Dendritic cell treated with granulocyte-macrophage colony-stimulating factor and Interleukin-4, amounts not matched to agents 40 ng/mL and 50 ng/mL, for 4 days (primary cell): ENCODE measurements at regions of chr6 and their contacts with region 1.

Region 1: GRCh38 chr6:32689531-32690501 is 23.4 kb upstream of the HLA-DQB1 start:
- H3K4me3 Mint-ChIP-seq: peak overlapping the region; percentile 59
- H3K27ac Mint-ChIP-seq: peak overlapping the region; percentile 86
- H3K4me1 Mint-ChIP-seq: peaks cover 33% of the 10 kb centered on the region
- H3K27me3 Mint-ChIP-seq: peaks cover 6% of the 10 kb centered on the region

Region 2: GRCh38 chr6:32424589-32425300 is 265.1 kb before region 1 on chr6:
- intact Hi-C with region 1: no loop called
- H3K4me3 Mint-ChIP-seq: no peak overlapping the region
- H3K27ac Mint-ChIP-seq: no peak overlapping the region
- H3K4me1 Mint-ChIP-seq: peaks cover 7% of the 10 kb centered on the region
- H3K27me3 Mint-ChIP-seq: peaks cover 17% of the 10 kb centered on the region

Region 3: GRCh38 chr6:32666420-32667300 is 23.2 kb before region 1 on chr6 and contains the start of gene HLA-DQB1:
- intact Hi-C with region 1: loop called (anchors 2 kb)
- H3K4me3 Mint-ChIP-seq: peak within 1 kb of the TSS; percentile 92
- H3K27ac Mint-ChIP-seq: peak within 1 kb of the TSS; percentile 100
- H3K4me1 Mint-ChIP-seq: peaks cover 63% of the 10 kb centered on the region
- H3K27me3 Mint-ChIP-seq: no peaks in the 10 kb centered on the region